ENCODE measurements at regions of chr9 and their contacts with region 1.

Region 1: DNA sequence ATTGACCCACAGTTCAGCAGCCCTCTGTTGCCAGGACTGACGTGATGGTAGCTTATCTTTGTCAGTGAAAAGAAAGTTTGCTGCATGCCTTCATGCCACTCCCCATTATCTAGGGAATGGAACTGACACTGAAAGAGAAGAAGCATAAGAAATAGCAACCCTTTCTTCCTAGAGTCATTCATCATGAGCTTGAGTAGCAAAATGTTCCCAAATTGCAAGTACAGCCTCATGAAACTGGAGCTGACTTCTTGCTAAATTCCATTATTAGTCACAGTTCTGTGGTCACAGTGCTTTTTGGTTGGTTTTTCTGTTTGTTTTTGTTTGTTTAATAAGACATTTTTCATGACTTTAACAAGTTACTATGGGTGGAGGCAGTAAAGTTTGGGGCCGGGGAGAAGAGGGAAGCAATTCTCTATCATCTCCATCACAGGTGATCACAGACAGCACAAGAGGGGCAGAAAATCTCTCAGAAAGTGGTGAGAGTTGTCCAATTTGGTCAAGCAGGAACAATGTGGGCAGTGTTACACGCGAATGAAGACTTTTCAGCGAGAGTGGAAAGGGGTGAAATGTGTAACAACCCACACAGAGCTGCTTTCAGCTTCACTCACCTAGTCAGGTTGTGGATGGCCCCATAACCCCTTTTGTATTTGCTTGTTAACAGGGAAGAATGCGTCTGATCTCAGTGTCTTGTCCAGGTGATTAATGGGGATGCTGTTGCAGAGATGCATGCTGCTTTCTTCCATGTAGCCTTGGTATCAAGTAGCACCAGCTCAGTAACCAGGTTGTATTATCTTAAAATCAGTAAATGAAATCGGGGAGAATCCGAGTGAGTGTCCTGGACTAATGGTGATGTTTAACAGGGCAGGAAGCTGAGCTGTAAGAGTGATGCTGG is 440.4 kb downstream of the DMRT2 start:
- DNase-seq: no peak
- H3K4me3 Mint-ChIP-seq: peak overlapping the region; percentile 11
- H3K27ac Mint-ChIP-seq: peak overlapping the region; percentile 93
- H3K4me1 Mint-ChIP-seq: peaks cover 16% of the 10 kb centered on the region
- H3K27me3 Mint-ChIP-seq: no peaks in the 10 kb centered on the region

Region 2: DNA sequence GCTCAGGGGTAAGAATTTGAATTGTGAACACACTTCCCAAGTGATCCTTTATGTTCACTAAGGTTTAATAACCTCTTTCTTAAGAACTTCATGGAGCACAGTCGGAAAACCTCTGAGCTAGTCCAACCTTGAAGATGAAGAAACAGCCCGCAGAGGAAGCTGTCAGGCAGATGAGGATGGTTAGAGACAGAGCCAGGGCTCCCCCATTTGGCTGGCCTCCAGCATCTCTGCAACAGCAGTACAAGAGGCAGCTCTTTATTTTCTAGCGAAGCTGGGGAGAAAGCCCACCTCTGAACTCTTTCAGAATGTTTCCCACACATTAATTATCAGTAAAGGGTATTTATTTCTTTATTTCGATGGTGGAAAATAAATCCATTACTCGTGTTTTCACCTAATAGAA is 89.6 kb before region 1 on chr9:
- intact Hi-C with region 1: no loop called
- DNase-seq: no peak
- H3K4me3 Mint-ChIP-seq: no peak overlapping the region
- H3K27ac Mint-ChIP-seq: no peak overlapping the region
- H3K4me1 Mint-ChIP-seq: no peaks in the 10 kb centered on the region
- H3K27me3 Mint-ChIP-seq: no peaks in the 10 kb centered on the region

Region 3: DNA sequence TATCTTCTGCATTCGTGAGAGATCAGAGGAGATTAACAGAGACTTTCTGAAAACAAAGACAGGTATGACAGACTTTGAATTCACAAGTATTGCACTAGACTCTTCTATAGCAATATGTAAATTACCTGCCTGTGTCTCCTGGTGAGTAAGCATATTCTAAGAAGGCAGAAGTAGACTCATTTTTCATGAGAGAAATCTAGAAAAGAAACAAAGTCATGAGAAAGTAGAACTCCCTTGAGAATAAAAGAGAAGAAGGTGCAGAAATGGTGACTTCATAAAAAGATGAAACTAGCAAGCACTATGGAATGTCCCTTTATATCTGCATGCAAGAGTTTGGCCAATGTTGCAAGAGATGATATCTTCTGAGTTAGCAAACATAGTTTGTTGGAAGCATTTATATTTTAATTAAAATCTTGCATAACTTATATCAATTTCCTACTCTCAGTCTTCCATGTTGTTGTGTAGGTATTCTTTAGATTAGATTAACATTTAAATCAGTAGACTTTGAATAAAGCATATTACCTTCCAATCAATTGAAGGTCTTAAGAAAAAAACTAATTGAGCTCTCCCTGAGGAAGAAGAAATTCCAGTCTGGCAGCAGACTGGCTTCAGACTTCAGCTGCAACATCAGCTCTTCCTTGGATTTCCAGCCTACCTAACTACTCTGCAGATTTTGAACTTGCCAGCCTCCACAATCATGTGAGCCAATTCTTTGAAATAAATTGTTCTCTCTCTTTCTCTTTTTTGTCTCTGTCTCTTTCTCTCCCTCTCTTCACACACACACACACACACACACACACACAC is 20.4 kb before region 1 on chr9:
- intact Hi-C with region 1: loop called (anchors 1 kb)
- DNase-seq: no peak
- H3K4me3 Mint-ChIP-seq: no peak overlapping the region
- H3K27ac Mint-ChIP-seq: peak overlapping the region; percentile 41
- H3K4me1 Mint-ChIP-seq: peaks cover 8% of the 10 kb centered on the region
- H3K27me3 Mint-ChIP-seq: no peaks in the 10 kb centered on the region

Region 4: DNA sequence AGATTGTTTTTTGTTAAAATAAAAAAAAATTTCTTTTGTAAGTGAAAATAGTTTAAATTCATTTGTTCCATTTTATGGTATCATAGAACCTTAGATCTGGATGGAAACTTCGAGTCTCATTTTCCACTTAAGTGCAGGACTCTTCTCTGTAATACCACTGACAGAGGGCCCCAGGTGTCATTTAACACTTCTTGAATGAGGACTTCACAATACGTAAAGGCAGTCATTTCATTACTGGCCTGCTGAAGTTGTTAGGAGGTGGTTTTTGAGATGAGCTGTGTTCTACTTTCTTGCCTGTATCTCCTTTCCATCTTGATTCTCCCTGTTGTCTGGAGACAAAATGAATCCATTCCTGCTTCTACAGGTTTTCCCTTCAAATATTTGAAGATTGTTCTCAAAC is 14.9 kb after region 1 on chr9:
- intact Hi-C with region 1: loop called (anchors 1 kb)
- DNase-seq: no peak
- H3K4me3 Mint-ChIP-seq: no peak overlapping the region
- H3K27ac Mint-ChIP-seq: peak overlapping the region; percentile 87
- H3K4me1 Mint-ChIP-seq: peaks cover 20% of the 10 kb centered on the region
- H3K27me3 Mint-ChIP-seq: no peaks in the 10 kb centered on the region

Region 5: GRCh38 chr9:1604942-1605560 is 114.5 kb after region 1 on chr9:
- intact Hi-C with region 1: loop called (anchors 10 kb)
- DNase-seq: no peak
- H3K4me3 Mint-ChIP-seq: no peak overlapping the region
- H3K27ac Mint-ChIP-seq: no peak overlapping the region
- H3K4me1 Mint-ChIP-seq: no peaks in the 10 kb centered on the region
- H3K27me3 Mint-ChIP-seq: no peaks in the 10 kb centered on the region